ENCODE measurements at regions of chr2 and their contacts with region 1.

Region 1: GRCh38 chr2:219475697-219476651 is 22.7 kb upstream of the GMPPA start:
- DNase-seq: no peak
- H3K4me3 ChIP-seq: no peak overlapping the region
- H3K27ac ChIP-seq: peak overlapping the region; percentile 73
- H3K27me3 ChIP-seq: no peaks in the 10 kb centered on the region
- CTCF ChIP-seq: peak; percentile 93

Region 2: DNA sequence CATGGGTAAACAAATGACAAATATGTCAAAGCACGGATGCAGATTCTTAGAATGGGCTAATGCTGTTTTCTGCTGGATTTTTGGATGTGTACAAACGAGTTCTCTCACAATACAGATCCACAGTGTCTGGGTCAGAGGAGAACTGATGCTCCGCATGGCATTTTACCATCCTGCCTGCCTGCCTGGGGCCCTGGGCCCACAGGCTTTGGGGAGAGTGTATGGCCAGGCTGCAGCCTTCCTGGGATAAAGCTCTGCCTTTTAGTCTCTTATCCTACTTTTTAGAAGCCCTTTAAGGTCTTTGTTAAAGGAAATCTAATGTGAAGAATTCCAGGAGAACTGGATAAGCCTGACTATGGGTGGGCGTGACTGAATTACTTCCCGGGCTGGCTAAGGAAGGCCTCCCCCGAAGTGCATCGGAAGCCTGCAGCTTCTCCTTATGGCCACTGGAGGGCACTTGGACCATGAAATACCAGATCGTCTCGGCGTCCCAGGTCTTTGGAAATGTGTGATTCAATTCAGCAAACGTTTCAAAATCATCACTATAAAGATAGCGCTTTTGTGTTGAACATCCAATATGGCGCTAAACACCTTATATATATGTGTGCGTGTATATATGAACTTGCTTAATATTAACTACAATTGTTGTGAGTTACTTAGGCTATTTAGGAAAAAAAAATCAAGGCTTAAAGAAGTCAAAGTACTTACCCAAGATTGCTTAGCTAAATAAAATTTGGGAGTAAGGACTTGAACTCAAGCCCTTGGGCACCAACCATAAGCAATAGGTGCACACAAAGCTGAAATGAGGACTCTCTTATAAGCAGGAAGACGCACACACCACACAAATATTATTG is 73.1 kb before region 1 on chr2:
- CTCF ChIA-PET with region 1: interaction called, 28 read pairs
- POLR2A ChIA-PET with region 1: no interaction called
- DNase-seq: peak; percentile 78
- H3K4me3 ChIP-seq: no peak overlapping the region
- H3K27ac ChIP-seq: no peak overlapping the region
- H3K27me3 ChIP-seq: no peaks in the 10 kb centered on the region
- CTCF ChIP-seq: peak; percentile 96

Region 3: DNA sequence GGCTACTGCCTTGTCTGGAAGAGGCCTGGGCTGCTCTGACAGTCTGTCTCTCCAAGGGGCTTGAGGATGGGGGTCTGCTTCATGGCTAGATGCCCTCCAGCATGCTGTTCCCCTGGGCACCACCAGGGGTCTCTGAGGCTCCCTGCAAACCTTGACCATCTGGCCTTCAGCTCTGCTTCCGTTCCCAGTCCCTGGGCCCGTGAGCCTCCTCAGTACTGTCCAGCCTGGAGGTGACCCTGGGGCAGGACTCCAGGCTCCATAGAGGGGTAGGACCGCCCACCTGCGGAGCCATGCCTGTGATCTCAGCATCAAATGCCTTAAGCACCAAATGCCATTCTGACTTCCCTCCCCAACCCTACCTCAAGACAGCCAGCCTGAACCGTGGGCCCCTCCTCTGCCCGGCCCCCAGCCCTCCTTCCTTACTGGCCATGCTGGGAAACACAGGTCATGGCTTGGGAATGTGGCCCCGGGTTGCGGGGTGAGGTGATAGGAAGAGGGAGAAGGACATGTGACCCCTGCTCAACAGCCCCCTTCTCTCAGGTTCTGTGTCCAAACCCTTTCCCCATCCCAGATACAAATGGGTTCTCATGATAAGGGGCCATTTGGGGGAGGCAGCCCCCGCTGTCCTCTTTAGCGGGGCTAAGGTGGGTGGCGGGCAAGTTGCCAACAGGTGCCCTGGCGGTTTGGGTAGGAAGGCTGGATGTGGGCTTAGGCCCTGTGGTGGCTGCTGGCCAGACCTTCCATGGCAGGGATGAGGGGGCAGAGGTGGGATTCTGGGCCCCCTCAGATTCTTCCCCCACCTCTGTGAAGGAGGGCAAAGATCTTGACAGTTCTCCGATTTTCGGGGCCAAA is 16.3 kb before region 1 on chr2:
- CTCF ChIA-PET with region 1: interaction called, 39 read pairs
- POLR2A ChIA-PET with region 1: interaction called, 7 read pairs
- DNase-seq: no peak
- H3K4me3 ChIP-seq: no peak overlapping the region
- H3K27ac ChIP-seq: peak overlapping the region; percentile 70
- H3K27me3 ChIP-seq: no peaks in the 10 kb centered on the region
- CTCF ChIP-seq: peak; percentile 95

Region 4: GRCh38 chr2:219498280-219499057 is 22.5 kb after region 1 on chr2 and contains the start of gene GMPPA:
- CTCF ChIA-PET with region 1: interaction called, 52 read pairs
- POLR2A ChIA-PET with region 1: interaction called, 3 read pairs
- DNase-seq: peak; percentile 97
- H3K4me3 ChIP-seq: peak within 1 kb of the TSS; percentile 80
- H3K27ac ChIP-seq: peak within 1 kb of the TSS; percentile 86
- H3K27me3 ChIP-seq: peaks cover 3% of the 10 kb centered on the region
- CTCF ChIP-seq: 0 out of 2 replicates have a peak, but pooled peaks have one; percentile 7
- polyA plus RNA-seq, gene GMPPA: 90.1 and 97.7 TPM in 2 replicates

Region 5: DNA sequence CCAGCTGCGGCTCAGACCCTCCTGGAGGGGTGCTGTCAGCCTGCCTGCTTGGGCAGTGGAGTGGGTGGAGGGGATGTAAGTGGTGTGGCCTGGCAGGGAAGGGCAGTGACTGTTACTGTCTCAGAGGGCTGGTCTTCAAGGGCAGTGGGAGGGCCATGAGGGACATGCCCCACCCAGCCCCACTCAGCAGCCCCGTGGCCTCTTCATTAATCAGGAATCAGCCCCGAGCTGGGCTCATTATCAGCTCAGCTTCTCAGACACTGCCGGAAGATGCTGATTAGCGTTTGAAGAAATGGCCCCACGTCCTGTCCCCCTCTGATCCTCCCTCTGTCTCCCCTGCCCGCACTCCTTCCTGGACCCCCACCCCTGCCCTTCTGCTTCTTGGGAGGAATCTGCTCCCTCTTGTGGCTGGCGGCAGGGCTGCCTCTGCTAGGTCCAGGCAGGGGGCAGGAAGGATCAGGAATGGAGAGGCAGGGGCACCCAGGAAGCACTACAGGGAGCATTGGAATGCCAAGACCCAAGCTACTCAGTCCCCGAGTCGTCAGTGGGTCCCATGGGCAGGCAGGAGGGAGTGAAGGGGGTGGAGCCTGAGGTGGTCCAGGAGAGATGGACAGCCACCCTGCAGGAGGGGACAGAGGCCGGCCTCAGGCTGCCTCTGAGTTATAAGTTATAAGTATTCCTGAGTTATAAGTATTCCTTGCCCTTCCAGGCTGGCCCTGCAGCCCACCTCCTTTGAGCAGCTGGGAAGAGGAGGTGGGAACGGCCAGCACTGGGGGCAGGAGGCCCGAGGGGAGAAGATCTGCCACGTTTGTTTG is 45.3 kb after region 1 on chr2:
- CTCF ChIA-PET with region 1: interaction called, 35 read pairs
- POLR2A ChIA-PET with region 1: no interaction called
- DNase-seq: no peak
- H3K4me3 ChIP-seq: no peak overlapping the region
- H3K27ac ChIP-seq: no peak overlapping the region
- H3K27me3 ChIP-seq: peaks cover 19% of the 10 kb centered on the region
- CTCF ChIP-seq: peak; percentile 87

Region 6: DNA sequence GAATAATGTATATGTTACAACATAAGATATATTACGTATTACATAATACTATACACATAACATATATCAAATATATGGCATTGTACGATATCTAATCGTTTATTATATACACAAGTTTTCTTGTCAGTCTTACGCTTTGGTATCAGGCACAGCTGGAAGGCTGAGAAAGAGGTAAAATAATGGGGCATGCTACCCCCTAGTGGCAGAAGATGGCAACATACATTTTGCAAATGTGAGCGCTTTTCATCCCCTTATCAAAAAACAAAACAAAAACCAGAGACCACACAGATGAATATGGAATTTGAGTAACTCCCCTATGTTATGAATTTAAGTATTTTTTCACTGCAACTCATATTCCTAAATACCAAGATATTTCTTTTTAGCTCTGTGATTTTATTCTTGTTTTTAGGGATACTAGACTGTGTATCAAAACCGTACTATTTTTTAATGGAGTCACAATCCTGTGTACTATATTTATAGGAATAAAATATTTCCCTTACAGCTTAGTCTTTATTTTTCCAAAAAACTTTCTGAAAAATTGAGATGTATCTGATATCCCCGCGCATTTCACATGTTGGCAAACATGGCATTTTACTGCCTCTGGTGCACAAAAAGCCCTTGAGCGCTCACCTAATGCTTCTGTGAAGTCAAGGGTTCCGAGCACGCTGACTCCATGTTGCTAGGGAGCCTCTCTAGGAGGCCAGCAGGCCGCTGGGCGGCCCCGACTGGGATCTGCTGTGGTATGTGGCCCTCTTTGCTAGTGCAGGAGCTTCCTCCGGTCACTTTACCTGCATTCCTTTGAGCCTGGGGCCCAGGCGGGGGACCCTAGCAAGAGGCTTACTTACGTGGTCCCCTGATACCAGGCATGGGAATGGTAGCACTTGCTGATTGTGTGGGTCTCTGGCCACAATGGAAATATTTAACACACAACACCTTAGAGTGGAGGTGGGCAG is 214.0 kb after region 1 on chr2:
- CTCF ChIA-PET with region 1: interaction called, 13 read pairs
- POLR2A ChIA-PET with region 1: no interaction called
- DNase-seq: no peak
- H3K4me3 ChIP-seq: no peak overlapping the region
- H3K27ac ChIP-seq: no peak overlapping the region
- H3K27me3 ChIP-seq: peaks cover 3% of the 10 kb centered on the region
- CTCF ChIP-seq: peak; percentile 73